Breast epithelium (tissue), 4 donors: ENCODE measurements at regions of chr11 and their contacts with region 1.

Region 1: DNA sequence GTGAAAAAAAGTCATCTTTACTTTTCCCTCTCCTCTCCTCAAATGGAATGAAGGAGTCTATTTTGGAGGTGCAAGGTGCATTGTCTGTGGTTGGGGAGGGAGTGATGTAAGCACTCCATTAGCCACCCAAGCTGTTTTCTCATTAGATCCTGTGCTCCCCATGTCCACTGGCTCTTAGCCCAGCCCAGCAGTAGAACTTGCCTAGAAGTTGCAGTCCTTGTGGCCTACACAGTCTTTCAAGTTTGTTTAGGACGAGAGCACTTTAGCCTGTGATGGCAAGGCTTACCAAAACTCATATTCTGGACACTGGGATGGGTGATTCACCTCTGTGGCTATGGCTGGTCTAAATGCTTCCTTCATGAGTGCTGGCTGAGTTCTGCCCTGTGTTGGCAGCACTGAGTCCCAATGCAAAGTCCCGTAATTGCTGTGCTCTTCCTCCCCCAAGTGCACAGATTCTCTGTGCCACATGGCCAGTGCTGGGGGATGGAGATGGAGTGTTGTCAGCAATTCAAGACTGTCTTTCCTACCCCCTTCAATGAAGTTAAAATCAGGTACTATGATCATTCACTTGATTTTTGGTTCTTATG is 15.8 kb downstream of the SLC22A25 start:
- DNase-seq: no peak
- H3K4me3 ChIP-seq: no peak overlapping the region
- H3K27ac ChIP-seq: no peak overlapping the region
- H3K4me1 ChIP-seq: no peaks in the 10 kb centered on the region
- H3K27me3 ChIP-seq: no peaks in the 10 kb centered on the region
- CTCF ChIP-seq: no peak
- POLR2A ChIP-seq: no peak

Region 2: DNA sequence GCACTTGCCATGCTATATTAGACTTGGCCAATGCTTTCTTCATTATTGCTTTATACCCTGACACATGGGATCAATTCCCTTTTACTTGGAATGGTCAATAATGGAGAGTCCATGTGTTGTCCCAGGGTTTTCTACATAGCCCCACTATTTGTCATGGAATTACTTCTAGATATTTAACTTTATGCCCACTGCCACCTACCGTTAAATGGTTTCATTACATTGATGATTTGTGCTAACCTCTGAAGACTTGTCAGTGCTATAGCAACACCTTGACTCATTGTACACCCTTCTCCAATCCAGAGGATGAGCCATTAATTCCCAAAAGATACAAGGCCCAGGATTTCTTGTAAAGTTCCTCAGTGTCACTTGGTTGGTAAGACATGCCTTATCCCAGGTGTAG is 47.2 kb after region 1 on chr11:
- intact Hi-C with region 1: loop called (anchors 2 kb)
- DNase-seq: no peak
- H3K4me3 ChIP-seq: no peak overlapping the region
- H3K27ac ChIP-seq: no peak overlapping the region
- H3K4me1 ChIP-seq: no peaks in the 10 kb centered on the region
- H3K27me3 ChIP-seq: no peaks in the 10 kb centered on the region
- CTCF ChIP-seq: no peak
- POLR2A ChIP-seq: no peak